IMR-90 (cell line): ENCODE measurements at regions of chr1 and their contacts with region 1.

Region 1: GRCh38 chr1:29235955-29236684 is at the start of gene PTPRU:
- DNase-seq: peak; percentile 58
- ATAC-seq: peak; percentile 91
- H3K4me3 ChIP-seq: peak within 1 kb of the TSS; percentile 61
- H3K27ac ChIP-seq: peak within 1 kb of the TSS; percentile 3; the same call in 1 of the 2 replicates
- H3K4me1 ChIP-seq: peaks cover 12% of the 10 kb centered on the region
- H3K27me3 ChIP-seq: peaks cover 4% of the 10 kb centered on the region; the same call in 1 of the 2 replicates
- CTCF ChIP-seq: peak; percentile 97
- POLR2A ChIP-seq: 0 out of 2 replicates have a peak, but pooled peaks have one; percentile 36
- RAD21 ChIP-seq: peak; percentile 95
- total RNA-seq, gene PTPRU: 5.0 and 7.0 TPM in 2 replicates

Region 2: GRCh38 chr1:29703596-29704370 is 467.7 kb after region 1 on chr1:
- CTCF ChIA-PET with region 1: interaction called, 3 read pairs
- POLR2A ChIA-PET with region 1: no interaction called
- dilution Hi-C with region 1: no loop called
- in situ Hi-C with region 1: loop called (anchors 10 kb)
- intact Hi-C with region 1: loop called (anchors 5 kb)
- DNase-seq: peak; percentile 54
- ATAC-seq: peak; percentile 76
- H3K4me3 ChIP-seq: no peak overlapping the region
- H3K27ac ChIP-seq: no peak overlapping the region
- H3K4me1 ChIP-seq: peaks cover 4% of the 10 kb centered on the region
- H3K27me3 ChIP-seq: no peaks in the 10 kb centered on the region; the same call in 1 of the 2 replicates
- CTCF ChIP-seq: peak; percentile 74
- POLR2A ChIP-seq: no peak
- RAD21 ChIP-seq: peak; percentile 69

Region 3: DNA sequence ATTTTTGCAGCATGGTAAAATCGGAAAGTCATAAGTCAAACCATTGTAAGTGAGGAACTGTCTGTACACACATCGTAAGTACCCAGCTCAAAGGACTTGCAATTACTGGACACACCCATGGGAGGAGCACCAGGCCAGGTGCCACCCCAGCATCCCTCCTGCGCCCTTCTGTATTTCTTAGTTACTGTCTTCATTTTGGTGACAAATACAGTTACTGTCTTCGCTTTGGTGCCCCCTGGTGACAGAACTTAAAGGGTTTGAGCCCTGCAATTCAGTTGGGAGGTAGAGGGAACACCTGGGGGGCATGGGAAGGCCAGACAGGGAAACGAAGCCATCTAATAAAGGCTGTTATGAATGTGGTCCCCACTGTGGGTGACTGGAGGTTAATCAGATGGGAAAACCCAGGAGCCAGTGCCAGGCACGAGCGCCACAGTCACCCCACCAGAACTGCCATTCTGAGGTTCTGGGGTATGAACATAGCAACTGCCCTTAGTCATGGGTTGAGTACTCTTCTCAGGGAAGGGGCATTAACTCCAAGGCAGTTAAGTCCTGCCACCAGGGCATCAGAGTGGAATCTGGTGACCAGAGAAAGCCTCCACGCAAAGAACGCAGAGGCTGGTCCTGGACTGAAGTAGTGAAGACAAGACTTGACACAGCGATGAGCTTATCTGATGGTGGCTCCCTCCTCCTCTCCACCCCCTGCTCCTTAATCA is 613.1 kb after region 1 on chr1:
- CTCF ChIA-PET with region 1: no interaction called
- POLR2A ChIA-PET with region 1: no interaction called
- dilution Hi-C with region 1: no loop called
- in situ Hi-C with region 1: loop called (anchors 5 kb)
- intact Hi-C with region 1: loop called (anchors 1 kb)
- DNase-seq: peak; percentile 17
- ATAC-seq: peak; percentile 57; the same call in 1 of the 2 replicates
- H3K4me3 ChIP-seq: no peak overlapping the region
- H3K27ac ChIP-seq: no peak overlapping the region
- H3K4me1 ChIP-seq: no peaks in the 10 kb centered on the region
- H3K27me3 ChIP-seq: peaks cover 1% of the 10 kb centered on the region; the same call in 1 of the 2 replicates
- CTCF ChIP-seq: peak; percentile 50
- POLR2A ChIP-seq: no peak
- RAD21 ChIP-seq: peak; percentile 52

Region 4: GRCh38 chr1:30106125-30106524 is 870.0 kb after region 1 on chr1:
- CTCF ChIA-PET with region 1: no interaction called
- POLR2A ChIA-PET with region 1: no interaction called
- dilution Hi-C with region 1: no loop called
- in situ Hi-C with region 1: no loop called
- intact Hi-C with region 1: loop called (anchors 1 kb)
- DNase-seq: peak; percentile 18
- ATAC-seq: peak; percentile 74
- H3K4me3 ChIP-seq: no peak overlapping the region
- H3K27ac ChIP-seq: no peak overlapping the region
- H3K4me1 ChIP-seq: no peaks in the 10 kb centered on the region
- H3K27me3 ChIP-seq: peaks cover 21% of the 10 kb centered on the region
- CTCF ChIP-seq: peak; percentile 52
- POLR2A ChIP-seq: no peak
- RAD21 ChIP-seq: peak; percentile 49

Region 5: DNA sequence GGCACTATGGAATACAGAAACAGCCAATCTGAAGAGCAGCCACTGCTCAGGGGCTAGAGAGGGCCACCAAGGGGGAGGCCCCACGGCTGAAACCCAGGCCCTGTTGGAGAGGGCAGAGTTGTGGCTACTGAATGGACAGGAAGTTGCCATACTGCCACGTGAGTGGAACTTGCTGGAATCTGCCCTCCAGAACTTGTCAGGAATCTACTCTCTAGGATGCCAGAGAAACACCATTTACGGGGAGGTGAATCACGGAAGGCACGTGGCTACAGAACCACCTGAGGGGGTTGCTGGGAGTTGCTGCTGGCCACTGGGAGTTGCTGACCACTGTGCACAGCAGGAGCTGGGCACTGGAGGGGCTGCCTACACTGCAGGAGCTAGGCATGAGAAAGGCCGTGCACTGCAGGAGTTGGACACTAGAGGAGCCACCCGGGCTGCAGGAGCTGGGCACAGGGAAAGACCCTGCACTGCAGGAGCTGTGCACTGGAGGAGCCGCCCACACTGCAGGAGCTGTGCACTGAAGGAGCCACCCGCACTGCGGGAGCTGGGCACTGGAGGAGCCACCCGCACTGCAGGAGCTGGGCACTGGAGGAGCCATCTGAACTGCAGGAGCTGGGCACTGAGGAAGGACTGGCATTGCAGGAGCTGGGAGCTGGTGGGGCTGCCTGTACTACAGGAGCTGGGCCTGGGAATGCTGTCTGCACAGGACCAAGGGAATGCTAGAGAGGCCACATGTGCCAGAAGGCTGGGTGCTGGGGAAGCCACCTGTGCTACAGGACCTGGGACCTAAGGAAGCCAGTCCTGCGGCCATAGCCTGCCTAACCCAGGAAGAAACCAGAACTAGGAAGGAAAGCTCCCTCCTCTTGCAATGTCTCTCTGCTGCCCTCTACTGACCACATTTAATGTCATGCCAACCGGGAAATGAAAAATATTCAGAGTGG is 1143.8 kb after region 1 on chr1:
- CTCF ChIA-PET with region 1: no interaction called
- POLR2A ChIA-PET with region 1: no interaction called
- dilution Hi-C with region 1: no loop called
- in situ Hi-C with region 1: loop called (anchors 10 kb)
- intact Hi-C with region 1: loop called (anchors 1 kb)
- DNase-seq: peak; percentile 64
- ATAC-seq: peak; percentile 93
- H3K4me3 ChIP-seq: no peak overlapping the region
- H3K27ac ChIP-seq: no peak overlapping the region
- H3K4me1 ChIP-seq: no peaks in the 10 kb centered on the region
- H3K27me3 ChIP-seq: peaks cover 3% of the 10 kb centered on the region; the same call in 1 of the 2 replicates
- CTCF ChIP-seq: peak; percentile 87
- POLR2A ChIP-seq: no peak
- RAD21 ChIP-seq: peak; percentile 66